AG04450 (cell line): ENCODE measurements at regions of chr10 and their contacts with region 1.

Region 1: GRCh38 chr10:119859420-119860258 is 13.0 kb downstream of the MCMBP start:
- DNase-seq: no peak
- H3K4me3 ChIP-seq: no peak overlapping the region
- H3K27ac ChIP-seq: no peak overlapping the region
- H3K27me3 ChIP-seq: no peaks in the 10 kb centered on the region
- CTCF ChIP-seq: peak; percentile 56

Region 2: DNA sequence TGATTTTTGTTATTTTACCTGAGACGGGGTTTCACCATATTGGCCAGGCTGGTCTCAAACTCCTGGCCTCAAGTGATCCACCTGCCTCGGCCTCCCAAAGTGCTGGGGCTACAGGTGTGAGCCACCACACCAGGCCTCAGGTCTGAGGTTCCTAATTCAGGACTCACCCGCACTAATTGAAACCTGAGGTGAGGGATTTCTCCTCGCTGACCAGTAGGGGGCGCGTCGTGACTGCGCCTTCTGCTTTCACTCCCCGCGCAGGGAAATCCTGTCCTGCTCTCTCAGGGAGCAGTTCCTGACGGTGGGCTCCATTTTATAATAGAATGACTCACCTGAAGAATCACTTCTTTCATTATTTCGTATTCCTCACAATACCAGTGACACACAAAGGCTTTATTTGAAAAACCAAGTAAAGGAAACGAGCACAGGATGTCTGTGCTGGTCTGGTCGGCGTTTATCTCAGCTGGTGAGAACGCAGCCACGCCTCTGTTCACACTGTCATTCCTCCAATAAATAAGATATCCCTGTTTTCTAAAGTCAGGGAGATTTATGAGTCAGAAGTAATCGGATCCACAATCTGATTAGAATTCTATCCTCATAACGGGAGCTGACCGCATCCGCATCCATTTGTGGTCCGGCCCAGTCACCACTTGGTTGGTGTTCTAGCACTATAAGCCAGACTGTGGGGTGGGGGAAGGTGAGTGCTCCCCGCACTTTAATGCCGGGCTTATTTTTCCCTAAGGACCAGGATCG is 173.0 kb before region 1 on chr10:
- CTCF ChIA-PET with region 1: interaction called, 68 read pairs
- POLR2A ChIA-PET with region 1: no interaction called
- DNase-seq: peak; percentile 69
- H3K4me3 ChIP-seq: peak overlapping the region; percentile 54
- H3K27ac ChIP-seq: peak overlapping the region; percentile 81
- H3K27me3 ChIP-seq: no peaks in the 10 kb centered on the region
- CTCF ChIP-seq: peak; percentile 86

Region 3: DNA sequence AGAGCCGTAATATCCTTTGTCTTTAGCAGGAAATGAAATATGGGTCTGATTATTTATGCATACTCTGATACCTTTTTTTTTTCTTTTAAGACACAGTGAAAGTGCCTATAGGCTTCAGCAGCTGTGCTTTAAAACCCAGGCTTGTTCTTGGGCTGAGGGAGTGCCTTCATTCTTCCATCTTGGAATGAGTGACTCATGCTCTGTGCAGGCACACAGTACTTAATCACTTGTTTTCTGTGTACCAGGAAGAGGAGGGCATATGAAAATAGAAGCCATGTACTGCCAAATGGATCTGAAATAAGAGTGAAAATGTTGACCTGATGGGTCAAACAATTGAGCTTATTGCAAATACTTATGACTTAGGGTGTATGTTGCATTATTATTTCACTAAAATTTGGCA is 121.8 kb before region 1 on chr10:
- CTCF ChIA-PET with region 1: interaction called, 13 read pairs
- POLR2A ChIA-PET with region 1: no interaction called
- DNase-seq: peak; percentile 61
- H3K4me3 ChIP-seq: no peak overlapping the region
- H3K27ac ChIP-seq: no peak overlapping the region
- H3K27me3 ChIP-seq: no peaks in the 10 kb centered on the region
- CTCF ChIP-seq: no peak

Region 4: DNA sequence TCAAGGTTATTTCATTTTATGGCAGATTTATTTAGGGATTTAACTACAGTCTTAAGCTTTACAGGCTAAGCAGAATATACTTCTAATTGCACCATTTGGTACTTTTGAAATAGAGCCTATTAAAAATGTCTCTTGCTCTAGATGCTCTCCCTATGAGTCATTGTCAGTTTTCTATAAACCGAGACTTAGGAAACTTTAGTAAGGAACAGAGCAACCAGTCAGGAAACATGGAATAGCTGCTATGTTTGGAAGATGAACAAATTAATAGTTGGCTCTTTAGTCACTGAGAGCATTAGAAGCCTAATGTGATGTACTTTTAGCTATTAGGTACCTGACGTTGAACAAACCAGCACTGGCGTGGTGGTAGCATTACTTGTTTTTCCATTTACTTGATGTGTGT is 98.5 kb before region 1 on chr10:
- CTCF ChIA-PET with region 1: interaction called, 13 read pairs
- POLR2A ChIA-PET with region 1: no interaction called
- DNase-seq: peak; percentile 61
- H3K4me3 ChIP-seq: no peak overlapping the region
- H3K27ac ChIP-seq: no peak overlapping the region
- H3K27me3 ChIP-seq: no peaks in the 10 kb centered on the region
- CTCF ChIP-seq: no peak

Region 5: GRCh38 chr10:119849031-119849789 is 10.4 kb before region 1 on chr10:
- CTCF ChIA-PET with region 1: interaction called, 27 read pairs
- POLR2A ChIA-PET with region 1: no interaction called
- DNase-seq: peak; percentile 46
- H3K4me3 ChIP-seq: no peak overlapping the region
- H3K27ac ChIP-seq: peak overlapping the region; percentile 80
- H3K27me3 ChIP-seq: no peaks in the 10 kb centered on the region
- CTCF ChIP-seq: no peak